ENCODE measurements at regions of chr12 and their contacts with region 1.

Region 1: GRCh38 chr12:50111693-50112455 is at the start of gene COX14:
- DNase-seq: peak; percentile 99 to 100
- ATAC-seq: peak; percentile 87 to 93
- H3K4me3 ChIP-seq: peak within 1 kb of the TSS; percentile 68
- H3K27ac ChIP-seq: peak within 1 kb of the TSS; percentile 74 to 90
- H3K4me1 ChIP-seq: peaks cover 29% of the 10 kb centered on the region
- CTCF ChIP-seq: peak; percentile 94
- EP300 ChIP-seq: no peak
- POLR2A ChIP-seq: peak; percentile 96
- RAD21 ChIP-seq: peak; percentile 40 to 48; a peak in 3 of 5 replicates
- polyA plus RNA-seq, gene COX14: 134 and 147 TPM in 2 replicates

Region 2: DNA sequence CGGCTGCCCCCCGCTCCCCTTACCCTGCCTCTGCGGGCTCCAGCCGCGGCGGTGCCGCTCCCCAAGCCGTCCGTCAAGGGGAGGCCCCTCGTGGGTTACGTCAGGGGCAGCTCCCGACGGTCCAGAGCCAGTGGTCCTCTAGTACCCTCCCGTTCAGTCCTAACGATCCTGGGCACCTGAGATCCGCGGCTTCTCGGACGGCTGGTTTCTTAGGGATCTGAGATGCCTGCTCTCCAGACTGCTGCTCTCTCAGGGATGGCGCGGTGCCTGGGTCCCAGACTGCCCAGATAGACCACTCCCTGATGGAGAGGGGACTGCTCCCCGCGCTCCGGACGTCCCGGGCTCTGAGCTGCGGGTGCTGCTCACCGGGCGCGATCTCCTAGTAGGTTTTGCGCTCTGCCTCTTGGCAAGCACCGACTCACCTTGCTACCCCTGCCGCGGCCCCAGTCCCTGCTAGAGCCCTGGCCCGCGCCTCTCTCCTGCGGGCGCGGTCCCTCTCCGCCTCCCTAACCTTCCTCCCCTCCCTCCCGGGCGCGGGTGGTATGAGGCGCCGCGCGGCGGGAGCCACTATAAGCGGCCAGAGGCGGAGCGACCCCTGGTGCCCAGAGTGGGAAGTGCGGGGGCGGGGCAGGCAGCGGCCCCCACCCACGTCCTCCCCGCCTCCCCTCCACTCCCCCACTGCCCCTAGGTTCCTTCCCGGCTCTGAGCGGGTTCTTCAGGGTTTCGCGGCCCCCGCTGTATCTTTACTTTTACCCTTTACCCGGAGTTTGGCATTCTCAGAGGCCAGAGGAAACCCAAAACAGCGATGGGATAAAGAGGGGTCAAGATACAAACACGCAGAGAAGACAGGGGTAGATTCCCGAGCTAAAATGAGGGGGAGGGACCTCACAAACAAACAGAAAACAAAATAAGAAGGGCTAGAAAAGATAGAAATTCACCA is 775.0 kb before region 1 on chr12 and contains the start of gene C1QL4:
- CTCF ChIA-PET with region 1: no interaction called
- POLR2A ChIA-PET with region 1: no interaction called
- DNase-seq: peak; percentile 75 to 84
- ATAC-seq: peak; percentile 78 to 88
- H3K4me3 ChIP-seq: peak within 1 kb of the TSS; percentile 64
- H3K27ac ChIP-seq: peak within 1 kb of the TSS; percentile 71 to 82
- H3K4me1 ChIP-seq: peaks cover 12% of the 10 kb centered on the region; the same call in 2 of the 3 replicates
- CTCF ChIP-seq: peak; percentile 95
- EP300 ChIP-seq: no peak
- POLR2A ChIP-seq: peak; percentile 62
- RAD21 ChIP-seq: peak; percentile 28 to 53
- polyA plus RNA-seq, gene C1QL4: 0.99 and 1.5 TPM in 2 replicates

Region 3: GRCh38 chr12:49903695-49904423 is 208.0 kb before region 1 on chr12 and contains the start of gene FAIM2:
- CTCF ChIA-PET with region 1: no interaction called
- POLR2A ChIA-PET with region 1: no interaction called
- DNase-seq: no peak
- ATAC-seq: no peak
- H3K4me3 ChIP-seq: no peak within 1 kb of the TSS
- H3K27ac ChIP-seq: no peak within 1 kb of the TSS
- H3K4me1 ChIP-seq: no peaks in the 10 kb centered on the region
- CTCF ChIP-seq: no peak
- EP300 ChIP-seq: no peak
- POLR2A ChIP-seq: no peak
- RAD21 ChIP-seq: no peak
- polyA plus RNA-seq, gene FAIM2: 0.11 and 0.23 TPM in 2 replicates

Region 4: DNA sequence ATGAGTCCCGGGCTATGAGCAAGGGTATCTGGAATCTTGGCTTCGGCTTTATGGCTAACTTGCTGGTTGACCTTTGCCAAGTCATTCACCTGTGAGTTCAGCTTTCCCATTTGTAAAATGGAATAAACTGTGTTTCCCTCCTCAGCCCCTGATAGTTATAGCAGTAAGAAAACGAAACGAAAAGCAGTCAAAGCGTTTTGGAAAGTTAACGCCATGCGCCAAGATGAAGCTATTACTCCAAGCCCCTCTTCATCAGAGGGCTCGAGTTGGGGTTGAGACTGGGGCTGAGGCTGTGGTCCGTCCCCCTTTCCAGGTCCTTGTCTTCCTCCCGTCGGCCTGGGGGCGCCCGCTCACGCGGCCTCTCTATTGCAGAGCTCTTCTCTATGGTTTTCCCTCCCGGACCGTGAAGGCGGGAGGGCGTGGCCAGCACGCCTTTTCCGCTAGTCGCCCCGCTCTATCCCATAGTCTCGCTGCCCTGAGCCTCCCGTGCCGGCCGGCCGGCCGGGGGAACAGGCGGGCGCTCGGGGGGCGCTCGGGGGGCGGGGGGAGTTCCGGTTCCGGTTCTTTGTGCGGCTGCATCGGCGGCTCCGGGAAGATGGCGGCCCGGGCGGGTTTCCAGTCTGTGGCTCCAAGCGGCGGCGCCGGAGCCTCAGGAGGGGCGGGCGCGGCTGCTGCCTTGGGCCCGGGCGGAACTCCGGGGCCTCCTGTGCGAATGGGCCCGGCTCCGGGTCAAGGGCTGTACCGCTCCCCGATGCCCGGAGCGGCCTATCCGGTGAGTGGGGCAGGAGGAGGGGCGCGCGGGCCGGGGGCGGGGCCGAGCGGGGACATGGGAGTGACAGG is 26.9 kb before region 1 on chr12 and contains the start of gene SMARCD1:
- CTCF ChIA-PET with region 1: interaction called, 309 read pairs
- POLR2A ChIA-PET with region 1: interaction called, 45 read pairs
- DNase-seq: peak; percentile 92 to 95
- ATAC-seq: peak; percentile 87 to 93
- H3K4me3 ChIP-seq: peak within 1 kb of the TSS; percentile 64
- H3K27ac ChIP-seq: peak within 1 kb of the TSS; percentile 96 to 99
- H3K4me1 ChIP-seq: peaks cover 36% of the 10 kb centered on the region
- CTCF ChIP-seq: peak; percentile 72
- EP300 ChIP-seq: no peak
- POLR2A ChIP-seq: peak; percentile 37; the same call in 1 of the 2 replicates
- RAD21 ChIP-seq: no peak
- polyA plus RNA-seq, gene SMARCD1: 80.7 and 113 TPM in 2 replicates

Region 5: GRCh38 chr12:50132505-50133135 is 20.7 kb after region 1 on chr12:
- CTCF ChIA-PET with region 1: interaction called, 128 read pairs
- POLR2A ChIA-PET with region 1: interaction called, 8 read pairs
- DNase-seq: no peak
- ATAC-seq: no peak
- H3K4me3 ChIP-seq: no peak overlapping the region
- H3K27ac ChIP-seq: no peak overlapping the region
- H3K4me1 ChIP-seq: no peaks in the 10 kb centered on the region
- CTCF ChIP-seq: no peak
- EP300 ChIP-seq: no peak
- POLR2A ChIP-seq: no peak
- RAD21 ChIP-seq: no peak

Region 6: GRCh38 chr12:50142993-50143392 is 31.1 kb after region 1 on chr12:
- CTCF ChIA-PET with region 1: interaction called, 24 read pairs
- POLR2A ChIA-PET with region 1: no interaction called
- DNase-seq: no peak
- ATAC-seq: no peak
- H3K4me3 ChIP-seq: no peak overlapping the region
- H3K27ac ChIP-seq: no peak overlapping the region
- H3K4me1 ChIP-seq: no peaks in the 10 kb centered on the region
- CTCF ChIP-seq: no peak
- EP300 ChIP-seq: no peak
- POLR2A ChIP-seq: no peak
- RAD21 ChIP-seq: no peak

Region 7: DNA sequence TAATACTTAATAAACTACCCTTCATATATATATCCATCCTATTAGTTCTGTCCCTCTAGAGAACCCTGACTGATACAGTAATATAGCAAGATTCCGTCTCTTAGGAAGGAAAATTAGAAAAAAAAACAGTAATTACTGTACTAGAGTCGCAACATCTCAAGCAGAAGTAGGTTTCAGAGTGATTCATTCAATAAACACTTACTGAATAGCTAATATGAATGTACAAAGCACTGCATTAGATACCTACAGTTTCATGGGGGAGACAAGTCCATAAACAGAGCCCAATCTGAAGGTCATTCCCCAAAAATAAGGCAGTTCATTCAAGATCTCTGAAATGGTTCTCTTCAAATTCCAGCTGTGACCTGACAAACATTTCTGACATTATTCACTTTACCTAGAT is 45.4 kb after region 1 on chr12:
- CTCF ChIA-PET with region 1: interaction called, 22 read pairs
- POLR2A ChIA-PET with region 1: interaction called, 3 read pairs
- DNase-seq: no peak
- ATAC-seq: no peak
- H3K4me3 ChIP-seq: no peak overlapping the region
- H3K27ac ChIP-seq: no peak overlapping the region
- H3K4me1 ChIP-seq: no peaks in the 10 kb centered on the region
- CTCF ChIP-seq: no peak
- EP300 ChIP-seq: no peak
- POLR2A ChIP-seq: no peak
- RAD21 ChIP-seq: no peak

Region 8: DNA sequence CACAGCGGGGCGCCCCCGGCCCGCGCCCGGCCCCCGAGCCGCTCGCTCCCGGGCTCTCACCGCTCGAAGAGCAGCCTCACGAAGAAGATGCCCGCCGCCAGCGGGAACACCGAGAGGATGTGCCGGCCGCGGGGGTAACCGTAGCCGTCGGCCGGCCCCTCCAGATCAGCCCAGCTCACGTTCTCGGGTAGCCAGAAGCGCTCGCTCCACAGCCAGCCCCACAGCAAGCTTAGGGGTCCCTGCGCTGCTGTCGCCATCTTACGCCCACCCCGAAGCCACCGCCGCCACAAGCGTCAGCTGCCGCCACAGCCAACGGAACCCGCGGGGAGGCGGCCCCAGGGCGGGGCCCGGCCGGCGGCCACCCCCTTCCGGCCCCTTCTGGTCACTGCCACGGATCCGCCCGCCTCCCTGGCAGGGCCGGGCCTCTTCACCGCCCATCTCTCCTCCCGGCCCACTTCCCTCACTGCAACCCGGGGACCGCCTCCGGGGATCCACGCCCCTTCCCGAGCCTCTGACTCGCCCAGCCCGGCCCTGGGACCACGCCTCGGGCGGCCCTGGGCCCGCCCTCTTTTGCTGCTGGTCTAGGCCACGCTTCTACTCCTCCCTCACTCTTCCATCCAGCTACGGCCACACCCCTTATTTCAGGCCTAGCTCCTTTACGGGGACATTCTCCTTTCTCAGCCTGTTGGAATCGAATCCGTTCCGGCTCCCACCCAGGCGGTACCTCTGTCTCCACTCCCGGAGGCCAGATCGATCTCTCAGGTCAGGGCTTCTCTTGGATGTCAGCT is 55.4 kb after region 1 on chr12 and contains the start of gene CERS5:
- CTCF ChIA-PET with region 1: interaction called, 75 read pairs
- POLR2A ChIA-PET with region 1: interaction called, 39 read pairs
- DNase-seq: peak; percentile 94 to 99
- ATAC-seq: peak; percentile 98 to 99
- H3K4me3 ChIP-seq: peak within 1 kb of the TSS; percentile 83
- H3K27ac ChIP-seq: peak within 1 kb of the TSS; percentile 84 to 96
- H3K4me1 ChIP-seq: peaks cover 10% of the 10 kb centered on the region; the same call in 2 of the 3 replicates
- CTCF ChIP-seq: no peak
- EP300 ChIP-seq: no peak
- POLR2A ChIP-seq: peak; percentile 74
- RAD21 ChIP-seq: no peak
- polyA plus RNA-seq, gene CERS5: 56.3 and 56.6 TPM in 2 replicates

Region 9: DNA sequence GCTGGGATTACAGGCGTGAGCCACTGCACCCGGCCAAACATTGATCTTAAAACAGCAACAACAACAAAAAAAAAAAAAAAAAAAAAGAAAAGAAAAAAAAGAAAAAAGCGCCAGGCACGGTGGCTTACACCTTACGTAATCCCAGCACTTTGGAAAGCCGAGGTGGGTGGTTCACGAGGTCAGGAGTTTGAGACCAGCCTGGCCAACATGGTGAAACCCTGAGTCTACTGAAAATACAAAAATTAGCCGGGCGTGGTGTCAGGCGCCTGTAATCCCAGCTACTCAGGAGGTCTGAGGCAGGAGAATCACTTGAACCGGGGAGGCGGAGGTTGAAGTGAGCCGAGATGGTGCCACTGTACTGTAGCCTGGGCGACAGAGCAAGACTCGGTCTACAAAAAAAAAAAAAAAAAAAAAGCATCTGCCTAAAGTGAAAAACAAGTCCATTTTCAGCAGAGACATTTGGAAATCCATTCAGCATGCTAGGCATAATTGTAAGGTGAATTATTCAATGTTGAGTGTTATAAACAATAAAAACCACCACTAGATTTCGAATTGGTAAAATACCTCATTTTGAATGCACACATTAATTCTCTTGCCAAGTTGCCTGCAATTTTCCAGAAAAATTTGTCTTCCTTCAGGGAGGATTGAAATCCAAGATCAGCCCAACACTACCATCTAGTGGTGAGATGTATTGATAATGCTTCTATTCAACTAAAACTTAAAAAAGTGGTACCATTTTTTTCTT is 63.3 kb after region 1 on chr12:
- CTCF ChIA-PET with region 1: interaction called, 75 read pairs
- POLR2A ChIA-PET with region 1: interaction called, 14 read pairs
- DNase-seq: peak; percentile 52 to 81
- ATAC-seq: peak in 1 of 2 experiments; percentile 72; a peak in 3 of 6 replicates
- H3K4me3 ChIP-seq: no peak overlapping the region
- H3K27ac ChIP-seq: no peak overlapping the region
- H3K4me1 ChIP-seq: 0 out of 3 replicates have a peak, but pooled peaks cover 4% of the 10 kb centered on the region
- CTCF ChIP-seq: peak; percentile 91
- EP300 ChIP-seq: no peak
- POLR2A ChIP-seq: no peak
- RAD21 ChIP-seq: peak; percentile 91 to 92

Measured in A549 (cell line).